ENCODE measurements at regions of chr11 and their contacts with region 1.

Region 1: GRCh38 chr11:16613512-16614381 is 124.7 kb upstream of the C11orf58 start:
- DNase-seq: peak; percentile 79
- ATAC-seq: peak; percentile 96
- H3K4me3 Mint-ChIP-seq: peak overlapping the region; percentile 56
- H3K27ac Mint-ChIP-seq: no peak overlapping the region
- H3K4me1 Mint-ChIP-seq: peaks cover 21% of the 10 kb centered on the region
- H3K27me3 Mint-ChIP-seq: peaks cover 51% of the 10 kb centered on the region

Region 2: GRCh38 chr11:15819679-15820286 is 794.0 kb before region 1 on chr11:
- CTCF ChIA-PET with region 1: interaction called, 10 read pairs
- POLR2A ChIA-PET with region 1: no interaction called
- DNase-seq: peak; percentile 50
- ATAC-seq: no peak
- H3K4me3 Mint-ChIP-seq: no peak overlapping the region
- H3K27ac Mint-ChIP-seq: no peak overlapping the region
- H3K4me1 Mint-ChIP-seq: no peaks in the 10 kb centered on the region
- H3K27me3 Mint-ChIP-seq: no peaks in the 10 kb centered on the region

Region 3: DNA sequence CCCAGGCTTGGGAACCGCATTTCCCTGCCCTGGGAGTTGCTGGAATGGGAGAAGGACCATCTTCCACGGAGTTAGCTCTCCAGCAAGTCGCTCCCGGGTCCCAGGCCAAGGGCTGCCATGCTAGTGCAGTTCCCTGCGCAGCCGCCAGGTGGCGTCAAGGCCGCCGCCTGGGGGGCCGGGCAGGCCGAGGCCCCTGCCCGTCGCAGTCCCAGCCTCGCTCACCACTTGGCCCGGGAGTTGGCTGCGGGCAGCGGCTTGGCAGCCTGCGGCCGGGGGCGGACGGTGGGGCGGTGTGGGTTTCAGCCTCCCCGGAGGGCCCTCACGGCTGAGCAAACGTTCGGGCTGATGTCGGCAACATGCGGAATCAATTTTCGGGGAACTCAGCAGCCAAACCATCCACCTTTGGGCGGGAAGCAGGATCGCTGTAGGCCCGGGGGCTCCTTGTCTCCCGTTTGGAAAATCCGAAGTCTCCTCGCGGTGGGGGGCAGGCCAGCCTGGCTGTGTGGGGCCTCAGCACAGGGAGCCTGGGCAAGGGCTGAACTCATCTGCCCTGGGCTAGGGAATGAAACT is 672.5 kb before region 1 on chr11:
- CTCF ChIA-PET with region 1: interaction called, 10 read pairs
- POLR2A ChIA-PET with region 1: no interaction called
- DNase-seq: no peak
- ATAC-seq: no peak
- H3K4me3 Mint-ChIP-seq: no peak overlapping the region
- H3K27ac Mint-ChIP-seq: no peak overlapping the region
- H3K4me1 Mint-ChIP-seq: no peaks in the 10 kb centered on the region
- H3K27me3 Mint-ChIP-seq: no peaks in the 10 kb centered on the region

Region 4: DNA sequence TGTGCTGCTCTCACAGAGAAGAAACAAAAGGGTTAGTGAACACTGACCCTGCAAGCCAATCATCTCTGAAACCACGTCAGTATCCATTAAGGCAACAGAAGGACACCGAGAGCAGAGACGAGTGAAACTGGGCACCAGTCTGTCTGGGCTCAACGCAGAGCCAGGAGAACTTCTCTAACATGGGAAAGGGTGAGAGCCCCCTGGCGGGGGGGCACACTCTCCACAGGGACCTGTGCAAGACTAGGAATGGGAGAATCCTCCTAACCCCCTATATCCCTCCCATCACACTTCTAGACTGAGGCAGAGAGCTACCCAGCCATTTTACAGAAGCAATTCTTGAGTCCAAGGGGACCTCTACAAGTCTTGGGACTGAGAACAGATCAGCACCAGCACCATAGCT is 543.2 kb before region 1 on chr11:
- CTCF ChIA-PET with region 1: no interaction called
- POLR2A ChIA-PET with region 1: no interaction called
- DNase-seq: no peak
- ATAC-seq: no peak
- H3K4me3 Mint-ChIP-seq: no peak overlapping the region
- H3K27ac Mint-ChIP-seq: no peak overlapping the region
- H3K4me1 Mint-ChIP-seq: no peaks in the 10 kb centered on the region
- H3K27me3 Mint-ChIP-seq: no peaks in the 10 kb centered on the region

Region 5: DNA sequence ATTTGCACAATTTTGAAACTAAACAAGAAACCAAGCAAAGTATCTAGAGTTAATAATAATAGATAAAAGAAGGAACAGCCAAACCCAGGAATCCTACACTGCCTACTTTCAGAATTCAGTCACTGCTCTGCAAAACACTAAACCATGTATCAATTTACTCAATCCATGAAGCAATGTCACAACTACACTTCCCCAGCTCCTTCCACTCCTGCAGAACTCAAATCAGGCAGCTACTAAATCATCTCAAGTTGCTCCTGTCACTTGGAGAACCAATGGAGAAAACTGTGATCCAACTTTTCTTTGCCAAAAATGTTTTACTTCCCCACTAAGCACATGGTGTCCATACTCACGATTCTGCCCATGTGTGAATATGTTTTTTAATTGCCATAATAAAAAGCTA is 99.8 kb after region 1 on chr11:
- CTCF ChIA-PET with region 1: no interaction called
- POLR2A ChIA-PET with region 1: no interaction called
- DNase-seq: no peak
- ATAC-seq: no peak
- H3K4me3 Mint-ChIP-seq: no peak overlapping the region
- H3K27ac Mint-ChIP-seq: no peak overlapping the region
- H3K4me1 Mint-ChIP-seq: no peaks in the 10 kb centered on the region
- H3K27me3 Mint-ChIP-seq: peaks cover 10% of the 10 kb centered on the region

Region 6: DNA sequence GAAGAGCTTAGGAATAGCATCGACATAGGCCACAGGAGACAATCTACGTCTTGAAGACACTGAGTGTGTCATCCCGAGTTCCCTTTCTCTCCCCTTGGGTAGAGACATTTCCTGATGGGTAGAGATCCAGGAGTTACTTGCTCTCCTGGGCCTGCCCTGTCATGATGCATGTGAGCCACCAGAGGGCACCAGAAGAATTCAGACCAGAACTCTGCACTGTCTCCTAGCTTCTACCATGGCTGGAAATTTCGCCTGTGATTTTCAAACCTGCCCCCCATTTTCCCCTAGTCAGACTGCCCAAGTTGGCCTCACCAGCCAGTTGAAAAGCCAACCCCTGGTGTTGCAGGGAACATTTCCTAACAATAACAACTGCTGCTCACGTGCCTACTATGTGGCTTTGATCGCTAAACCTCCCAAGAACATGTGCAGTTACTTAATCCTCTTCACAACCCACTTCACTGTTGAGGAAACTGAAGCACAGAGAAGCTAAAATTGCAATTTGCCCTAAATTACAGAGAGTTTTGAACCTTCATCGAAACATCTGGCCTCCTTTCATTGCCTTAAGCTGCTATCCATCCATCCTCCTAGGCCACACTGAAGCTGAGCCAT is 171.9 kb after region 1 on chr11:
- CTCF ChIA-PET with region 1: no interaction called
- POLR2A ChIA-PET with region 1: no interaction called
- DNase-seq: peak; percentile 64
- ATAC-seq: peak; percentile 83
- H3K4me3 Mint-ChIP-seq: no peak overlapping the region
- H3K27ac Mint-ChIP-seq: no peak overlapping the region
- H3K4me1 Mint-ChIP-seq: no peaks in the 10 kb centered on the region
- H3K27me3 Mint-ChIP-seq: no peaks in the 10 kb centered on the region